GM12878 (cell line): ENCODE measurements at regions of chr19 and their contacts with region 1.

Region 1: GRCh38 chr19:37953533-37954303 is 46.7 kb downstream of the SIPA1L3 start:
- DNase-seq: no peak
- ATAC-seq: no peak
- H3K4me3 ChIP-seq: no peak overlapping the region
- H3K27ac ChIP-seq: peak overlapping the region; percentile 57
- H3K4me1 ChIP-seq: peaks cover 45% of the 10 kb centered on the region
- H3K27me3 ChIP-seq: no peaks in the 10 kb centered on the region
- CTCF ChIP-seq: no peak
- EP300 ChIP-seq: no peak
- POLR2A ChIP-seq: no peak
- RAD21 ChIP-seq: no peak

Region 2: GRCh38 chr19:37845932-37846331 is 107.8 kb before region 1 on chr19:
- CTCF ChIA-PET with region 1: no interaction called
- POLR2A ChIA-PET with region 1: no interaction called
- RAD21 ChIA-PET with region 1: no interaction called
- SMC1A ChIA-PET with region 1: no interaction called
- in situ Hi-C with region 1: no loop called
- intact Hi-C with region 1: no loop called
- DNase-seq: no peak
- ATAC-seq: no peak
- H3K4me3 ChIP-seq: no peak overlapping the region
- H3K27ac ChIP-seq: no peak overlapping the region
- H3K4me1 ChIP-seq: no peaks in the 10 kb centered on the region
- H3K27me3 ChIP-seq: no peaks in the 10 kb centered on the region
- CTCF ChIP-seq: no peak
- EP300 ChIP-seq: no peak
- POLR2A ChIP-seq: no peak
- RAD21 ChIP-seq: no peak

Region 3: GRCh38 chr19:37938353-37938752 is 15.4 kb before region 1 on chr19:
- CTCF ChIA-PET with region 1: interaction called, 9 read pairs
- POLR2A ChIA-PET with region 1: interaction called, 21 read pairs
- RAD21 ChIA-PET with region 1: interaction called, 5 read pairs
- SMC1A ChIA-PET with region 1: interaction called, 33 read pairs
- in situ Hi-C with region 1: no loop called
- intact Hi-C with region 1: loop called (anchors 2 kb)
- DNase-seq: no peak
- ATAC-seq: no peak
- H3K4me3 ChIP-seq: no peak overlapping the region; the same call in 1 of the 2 replicates
- H3K27ac ChIP-seq: no peak overlapping the region
- H3K4me1 ChIP-seq: peaks cover 3% of the 10 kb centered on the region; the same call in 1 of the 2 replicates
- H3K27me3 ChIP-seq: no peaks in the 10 kb centered on the region
- CTCF ChIP-seq: no peak
- EP300 ChIP-seq: no peak
- POLR2A ChIP-seq: no peak
- RAD21 ChIP-seq: no peak

Region 4: GRCh38 chr19:37943480-37943879 is 10.2 kb before region 1 on chr19:
- CTCF ChIA-PET with region 1: interaction called, 7 read pairs
- POLR2A ChIA-PET with region 1: interaction called, 3 read pairs
- RAD21 ChIA-PET with region 1: no interaction called
- SMC1A ChIA-PET with region 1: interaction called, 16 read pairs
- in situ Hi-C with region 1: no loop called
- intact Hi-C with region 1: loop called (anchors 2 kb)
- DNase-seq: no peak
- ATAC-seq: no peak
- H3K4me3 ChIP-seq: no peak overlapping the region
- H3K27ac ChIP-seq: no peak overlapping the region
- H3K4me1 ChIP-seq: no peaks in the 10 kb centered on the region
- H3K27me3 ChIP-seq: no peaks in the 10 kb centered on the region
- CTCF ChIP-seq: no peak
- EP300 ChIP-seq: no peak
- POLR2A ChIP-seq: no peak
- RAD21 ChIP-seq: no peak

Region 5: DNA sequence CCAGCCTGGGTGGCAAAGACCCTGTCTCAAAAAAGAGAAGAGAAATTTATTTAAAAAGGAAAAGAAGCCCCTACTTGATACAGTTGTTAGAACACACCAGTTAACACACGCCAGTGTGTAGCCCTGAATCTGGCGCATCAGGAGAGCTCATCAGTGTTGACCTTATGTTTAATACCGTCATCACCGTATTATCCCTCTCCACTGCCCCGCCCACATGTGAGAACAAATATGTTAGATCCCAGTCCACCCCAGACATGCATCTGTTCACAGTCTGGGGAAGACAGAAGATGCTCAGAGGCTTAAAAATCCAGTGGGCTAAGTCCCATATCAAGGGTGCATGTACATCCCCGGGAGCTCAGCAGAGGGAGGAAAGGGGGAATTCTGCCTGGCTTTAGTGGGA is 115.1 kb after region 1 on chr19:
- CTCF ChIA-PET with region 1: no interaction called
- POLR2A ChIA-PET with region 1: no interaction called
- RAD21 ChIA-PET with region 1: no interaction called
- SMC1A ChIA-PET with region 1: no interaction called
- in situ Hi-C with region 1: no loop called
- intact Hi-C with region 1: no loop called
- DNase-seq: no peak
- ATAC-seq: no peak
- H3K4me3 ChIP-seq: no peak overlapping the region
- H3K27ac ChIP-seq: no peak overlapping the region
- H3K4me1 ChIP-seq: no peaks in the 10 kb centered on the region
- H3K27me3 ChIP-seq: no peaks in the 10 kb centered on the region
- CTCF ChIP-seq: no peak
- EP300 ChIP-seq: no peak
- POLR2A ChIP-seq: no peak
- RAD21 ChIP-seq: no peak